Panc1 (cell line): ENCODE measurements at regions of chr13 and their contacts with region 1.

Region 1: GRCh38 chr13:43085545-43085944 is 62.2 kb downstream of the DNAJC15 start:
- DNase-seq: peak; percentile 0
- ATAC-seq: no peak
- H3K4me3 ChIP-seq: no peak overlapping the region
- H3K27ac ChIP-seq: no peak overlapping the region
- H3K4me1 ChIP-seq: no peaks in the 10 kb centered on the region; the same call in 1 of the 2 replicates
- H3K27me3 ChIP-seq: no peaks in the 10 kb centered on the region
- CTCF ChIP-seq: peak; percentile 47; the same call in 1 of the 2 replicates

Region 2: GRCh38 chr13:43170506-43170905 is 85.0 kb after region 1 on chr13:
- CTCF ChIA-PET with region 1: no interaction called
- POLR2A ChIA-PET with region 1: no interaction called
- in situ Hi-C with region 1: no loop called
- intact Hi-C with region 1: no loop called
- DNase-seq: no peak
- ATAC-seq: no peak
- H3K4me3 ChIP-seq: no peak overlapping the region
- H3K27ac ChIP-seq: no peak overlapping the region
- H3K4me1 ChIP-seq: no peaks in the 10 kb centered on the region
- H3K27me3 ChIP-seq: no peaks in the 10 kb centered on the region
- CTCF ChIP-seq: no peak

Region 3: DNA sequence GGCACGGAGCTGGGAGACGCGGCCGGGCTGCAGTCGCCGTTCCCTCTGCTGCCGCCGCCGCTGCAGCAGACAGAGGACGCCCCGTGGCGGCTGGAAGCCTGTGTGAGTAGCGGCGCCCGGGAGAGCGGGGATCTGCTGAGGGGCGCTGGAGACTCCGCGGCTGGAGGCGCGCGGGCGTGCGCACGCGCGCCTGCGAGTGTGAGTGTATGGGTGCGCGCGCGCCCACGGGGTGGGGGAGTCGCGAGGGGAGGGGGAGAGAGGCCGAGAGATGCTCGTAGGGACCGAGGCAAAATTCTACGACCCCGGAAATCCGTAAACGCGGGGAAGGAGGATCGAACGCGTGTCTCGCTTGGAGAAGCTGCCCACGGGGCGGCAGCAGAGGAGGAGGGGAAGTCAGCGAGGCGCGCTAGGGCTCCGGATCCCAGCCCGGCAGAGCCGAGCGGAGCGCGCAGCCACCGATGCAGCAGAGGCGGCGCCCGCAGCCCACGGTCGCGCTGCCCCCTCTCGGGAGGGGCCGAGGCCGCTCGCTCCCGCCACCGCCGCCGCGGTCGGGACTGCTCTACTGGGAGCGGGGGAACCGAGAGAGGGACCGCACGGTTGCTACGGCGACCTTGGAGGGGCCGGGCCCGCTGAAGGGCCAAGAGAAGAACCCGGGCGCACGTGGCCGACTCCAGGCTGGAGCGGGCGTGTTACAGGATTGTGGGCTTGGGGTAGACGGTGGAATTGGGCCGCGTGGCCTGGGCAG is 701.4 kb after region 1 on chr13 and contains the start of gene ENOX1:
- CTCF ChIA-PET with region 1: no interaction called
- POLR2A ChIA-PET with region 1: no interaction called
- in situ Hi-C with region 1: no loop called
- intact Hi-C with region 1: loop called (anchors 10 kb)
- DNase-seq: no peak
- ATAC-seq: peak; percentile 70
- H3K4me3 ChIP-seq: peak within 1 kb of the TSS; percentile 48 to 53
- H3K27ac ChIP-seq: no peak within 1 kb of the TSS
- H3K4me1 ChIP-seq: peaks cover 3% of the 10 kb centered on the region; the same call in 1 of the 2 replicates
- H3K27me3 ChIP-seq: peaks cover 2% of the 10 kb centered on the region; the same call in 1 of the 2 replicates
- CTCF ChIP-seq: peak; percentile 43
- total RNA-seq, gene ENOX1: 0.23 TPM